Activated T-helper 2 cell treated with anti-CD3 and anti-CD28 coated beads, Interferon-gamma antibody, Interleukin-2, Interleukin-4, amounts not matched to agents 10 μg/mL and 5 μg/mL and 100 μg/mL, durations not matched to agents 14 hours and 24 hours and 36 hours (primary cell): ENCODE measurements at regions of chr3 and their contacts with region 1.

Region 1: GRCh38 chr3:19931180-19931692 is 2.8 kb downstream of the EFHB start:
- DNase-seq: no peak
- H3K4me3 Mint-ChIP-seq: peak overlapping the region; percentile 35
- H3K27ac Mint-ChIP-seq: peak overlapping the region; percentile 88
- H3K4me1 Mint-ChIP-seq: peaks cover 36% of the 10 kb centered on the region
- H3K27me3 Mint-ChIP-seq: peaks cover 17% of the 10 kb centered on the region

Region 2: DNA sequence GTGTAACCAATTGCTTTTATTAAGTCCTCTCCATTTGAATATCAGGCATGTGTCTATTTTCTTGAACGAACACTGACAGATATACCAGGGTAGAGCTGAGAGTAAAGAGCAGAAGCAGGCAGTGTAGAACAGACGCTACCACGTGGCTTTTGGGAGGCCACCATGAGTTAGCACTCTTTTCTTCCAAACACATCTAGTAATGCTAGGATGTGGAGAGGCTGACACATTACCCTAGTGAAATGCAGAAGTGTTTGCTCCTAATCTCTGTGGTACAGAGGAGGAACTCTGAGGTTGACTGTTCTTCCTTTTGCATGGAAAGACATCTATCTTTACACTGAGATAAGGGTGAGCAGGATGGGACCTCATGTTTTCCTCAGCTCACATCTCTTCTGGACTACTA is 1722.4 kb before region 1 on chr3:
- intact Hi-C with region 1: loop called (anchors 10 kb)
- DNase-seq: no peak
- H3K4me3 Mint-ChIP-seq: no peak overlapping the region
- H3K27ac Mint-ChIP-seq: peak overlapping the region; percentile 50
- H3K4me1 Mint-ChIP-seq: peaks cover 44% of the 10 kb centered on the region
- H3K27me3 Mint-ChIP-seq: no peaks in the 10 kb centered on the region

Region 3: DNA sequence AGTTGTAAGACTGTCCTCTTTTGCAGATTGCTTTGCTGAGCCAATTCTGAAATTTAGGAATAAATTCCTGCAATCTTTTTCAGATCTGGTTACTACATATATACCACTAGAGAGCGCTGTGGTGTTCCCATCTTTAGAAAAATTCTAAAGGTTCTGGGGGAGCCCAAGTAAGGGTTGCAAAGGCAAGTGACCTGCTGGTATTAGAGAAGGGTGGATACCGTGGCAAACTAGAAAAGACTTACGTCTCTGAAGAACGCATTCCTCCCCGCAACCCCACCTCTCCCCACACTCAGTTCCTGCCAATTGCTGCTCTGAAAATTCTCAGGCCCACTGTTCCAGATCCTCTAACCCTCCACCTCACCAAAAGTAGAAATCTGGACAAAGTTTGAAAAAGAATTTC is 45.8 kb before region 1 on chr3:
- intact Hi-C with region 1: loop called (anchors 5 kb)
- DNase-seq: no peak
- H3K4me3 Mint-ChIP-seq: no peak overlapping the region
- H3K27ac Mint-ChIP-seq: no peak overlapping the region
- H3K4me1 Mint-ChIP-seq: no peaks in the 10 kb centered on the region
- H3K27me3 Mint-ChIP-seq: peaks cover 7% of the 10 kb centered on the region

Region 4: GRCh38 chr3:20039766-20040475 is 108.7 kb after region 1 on chr3 and contains the start of gene KAT2B:
- intact Hi-C with region 1: loop called (anchors 1 kb)
- DNase-seq: peak; percentile 77
- H3K4me3 Mint-ChIP-seq: peak within 1 kb of the TSS; percentile 95
- H3K27ac Mint-ChIP-seq: peak within 1 kb of the TSS; percentile 91
- H3K4me1 Mint-ChIP-seq: peaks cover 45% of the 10 kb centered on the region
- H3K27me3 Mint-ChIP-seq: peaks cover 5% of the 10 kb centered on the region
- total RNA-seq, gene KAT2B: 10.9 and 12.1 TPM in 2 replicates

Region 5: GRCh38 chr3:20060974-20061685 is 129.9 kb after region 1 on chr3:
- intact Hi-C with region 1: loop called (anchors 1 kb)
- DNase-seq: no peak
- H3K4me3 Mint-ChIP-seq: no peak overlapping the region
- H3K27ac Mint-ChIP-seq: peak overlapping the region; percentile 48
- H3K4me1 Mint-ChIP-seq: peaks cover 26% of the 10 kb centered on the region
- H3K27me3 Mint-ChIP-seq: peaks cover 3% of the 10 kb centered on the region